Lower leg skin (tissue), 4 donors: ENCODE measurements at regions of chr16 and their contacts with region 1.

Region 1: DNA sequence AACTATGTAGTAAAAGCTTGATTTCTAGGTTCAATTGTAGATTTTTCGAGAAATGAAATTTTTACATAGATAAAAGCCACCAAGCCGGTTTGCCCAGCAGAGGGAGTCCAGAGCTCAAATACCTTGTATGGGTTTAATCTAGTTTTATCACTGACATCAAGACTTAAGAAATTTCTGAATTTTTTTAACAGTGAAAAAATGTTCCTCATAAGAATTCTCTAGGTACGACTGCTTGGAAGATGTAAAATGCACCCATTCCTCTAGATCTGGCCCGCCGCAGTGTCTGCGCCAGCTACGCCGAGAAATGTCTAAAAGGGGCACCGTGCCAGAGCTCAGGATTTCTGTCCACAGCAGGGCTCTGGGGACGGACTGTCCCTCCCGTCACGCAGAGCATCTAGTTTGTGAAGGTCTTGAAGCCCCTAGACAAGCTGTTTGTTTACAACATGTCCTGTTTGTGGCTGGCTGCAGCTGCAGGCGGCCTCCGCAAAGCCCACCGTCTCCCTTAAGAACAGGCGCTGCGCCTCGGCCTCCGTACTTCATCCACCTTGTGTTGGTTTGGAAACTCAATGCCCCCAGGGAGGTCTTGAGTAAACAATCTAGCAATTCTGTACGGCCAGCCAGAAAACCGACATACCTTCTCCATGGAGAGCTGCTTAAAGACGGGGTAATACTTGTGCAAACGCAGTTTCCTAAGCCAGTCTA is 24.8 kb downstream of the MAP1LC3B start:
- DNase-seq: peak in 1 of 2 donors; percentile 81
- H3K4me3 ChIP-seq: no peak overlapping the region
- CTCF ChIP-seq: no peak
- POLR2A ChIP-seq: no peak

Region 2: GRCh38 chr16:87636072-87636684 is 219.2 kb after region 1 on chr16:
- intact Hi-C with region 1: loop called (anchors 10 kb)
- DNase-seq: peak; percentile 68 to 95
- H3K4me3 ChIP-seq: no peak overlapping the region
- CTCF ChIP-seq: no peak
- POLR2A ChIP-seq: no peak